Posterior vena cava (tissue), 2 donors: ENCODE measurements at regions of chr5 and their contacts with region 1.

Region 1: DNA sequence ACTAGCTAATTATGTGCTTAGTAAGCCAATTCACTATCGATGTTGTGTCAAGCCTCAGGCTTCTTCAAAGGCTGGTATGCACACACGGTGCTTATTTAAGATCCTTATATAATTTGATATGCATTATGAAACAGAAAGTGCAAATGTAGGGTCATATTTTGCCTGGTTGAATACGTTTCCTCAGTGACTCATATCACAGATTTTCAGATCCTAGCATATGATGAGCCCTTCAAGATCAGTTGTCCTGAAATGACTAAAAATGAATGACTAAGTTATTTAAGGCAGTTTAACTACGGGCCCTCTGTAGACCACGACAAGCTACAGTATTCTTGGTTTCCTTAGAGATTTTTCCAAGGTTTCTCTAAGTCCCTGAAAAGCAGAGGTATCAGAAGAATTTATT is 778.3 kb downstream of the PRELID2 start:
- DNase-seq: no peak

Region 2: GRCh38 chr5:145010834-145011233 is 46.0 kb before region 1 on chr5:
- intact Hi-C with region 1: loop called in 1 of 2 experiments (anchors 2 kb)
- DNase-seq: no peak